Caco-2 (cell line): ENCODE measurements at regions of chr18 and their contacts with region 1.

Region 1: DNA sequence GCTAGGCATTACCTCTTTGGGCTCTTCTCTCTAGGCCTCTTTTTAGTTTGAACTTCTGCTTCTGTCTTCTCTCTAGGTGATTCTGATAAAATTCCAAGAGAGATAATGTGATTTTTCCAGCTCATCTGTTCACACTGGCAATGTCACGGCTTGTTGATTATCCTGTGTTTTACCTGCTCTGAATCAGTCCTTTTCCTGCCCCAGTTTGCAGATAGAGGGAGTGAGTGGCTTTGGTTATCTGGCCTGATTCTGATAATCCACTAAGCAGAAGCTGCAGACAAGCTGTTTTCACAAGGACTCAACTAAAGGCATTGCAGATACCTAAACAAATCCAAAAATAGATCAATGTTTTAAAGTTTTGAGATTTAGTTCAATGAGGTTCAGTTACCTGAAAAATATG is 111.9 kb downstream of the DCC start:
- DNase-seq: no peak
- H3K4me3 ChIP-seq: no peak overlapping the region
- H3K4me3 Mint-ChIP-seq: no peak overlapping the region
- H3K27ac Mint-ChIP-seq: no peak overlapping the region
- H3K4me1 ChIP-seq: no peaks in the 10 kb centered on the region
- H3K4me1 Mint-ChIP-seq: no peaks in the 10 kb centered on the region
- H3K27me3 ChIP-seq: no peaks in the 10 kb centered on the region
- H3K27me3 Mint-ChIP-seq: no peaks in the 10 kb centered on the region
- CTCF ChIP-seq: no peak

Region 2: GRCh38 chr18:52484977-52485376 is 33.1 kb after region 1 on chr18:
- CTCF ChIA-PET with region 1: no interaction called
- POLR2A ChIA-PET with region 1: no interaction called
- intact Hi-C with region 1: loop called (anchors 2 kb)
- DNase-seq: no peak
- H3K4me3 ChIP-seq: no peak overlapping the region
- H3K4me3 Mint-ChIP-seq: no peak overlapping the region
- H3K27ac Mint-ChIP-seq: no peak overlapping the region
- H3K4me1 ChIP-seq: no peaks in the 10 kb centered on the region
- H3K4me1 Mint-ChIP-seq: peaks cover 5% of the 10 kb centered on the region
- H3K27me3 ChIP-seq: no peaks in the 10 kb centered on the region
- H3K27me3 Mint-ChIP-seq: peaks cover 19% of the 10 kb centered on the region
- CTCF ChIP-seq: no peak